OCI-LY7 (cell line): ENCODE measurements at regions of chr2 and their contacts with region 1.

Region 1: GRCh38 chr2:236180831-236181453 is 12.8 kb upstream of the GBX2 start:
- DNase-seq: peak; percentile 45
- H3K4me3 ChIP-seq: no peak overlapping the region
- H3K27ac ChIP-seq: no peak overlapping the region
- H3K4me1 ChIP-seq: no peaks in the 10 kb centered on the region
- CTCF ChIP-seq: peak; percentile 98

Region 2: GRCh38 chr2:235766278-235766677 is 414.7 kb before region 1 on chr2:
- CTCF ChIA-PET with region 1: interaction called, 5 read pairs
- POLR2A ChIA-PET with region 1: no interaction called
- intact Hi-C with region 1: loop called (anchors 2 kb)
- DNase-seq: peak; percentile 63
- H3K4me3 ChIP-seq: no peak overlapping the region
- H3K27ac ChIP-seq: no peak overlapping the region
- H3K4me1 ChIP-seq: no peaks in the 10 kb centered on the region
- CTCF ChIP-seq: peak; percentile 92

Region 3: GRCh38 chr2:235779444-235779896 is 401.5 kb before region 1 on chr2:
- CTCF ChIA-PET with region 1: no interaction called
- POLR2A ChIA-PET with region 1: no interaction called
- intact Hi-C with region 1: loop called (anchors 1 kb)
- DNase-seq: peak; percentile 56
- H3K4me3 ChIP-seq: no peak overlapping the region
- H3K27ac ChIP-seq: no peak overlapping the region
- H3K4me1 ChIP-seq: no peaks in the 10 kb centered on the region
- CTCF ChIP-seq: peak; percentile 88